Heart left ventricle (tissue), 16 donors: ENCODE measurements at regions of chr10 and their contacts with region 1.

Region 1: GRCh38 chr10:43396928-43397624 is 11.9 kb downstream of the HNRNPF start:
- DNase-seq: peak; percentile 91 to 93 (median 92)
- ATAC-seq: peak; percentile 87 to 92 (median 92)
- H3K4me3 ChIP-seq: peak overlapping the region; percentile 12 to 90 (median 73)
- H3K27ac ChIP-seq: peak overlapping the region; percentile 90 to 99 (median 96)
- H3K4me1 ChIP-seq: peaks cover 0 to 84% (median 42%) of the 10 kb centered on the region in 12 donors
- H3K27me3 ChIP-seq: no peaks in the 10 kb centered on the region
- CTCF ChIP-seq: no peak
- POLR2A ChIP-seq: peak in 1 of 2 donors; percentile 47

Region 2: DNA sequence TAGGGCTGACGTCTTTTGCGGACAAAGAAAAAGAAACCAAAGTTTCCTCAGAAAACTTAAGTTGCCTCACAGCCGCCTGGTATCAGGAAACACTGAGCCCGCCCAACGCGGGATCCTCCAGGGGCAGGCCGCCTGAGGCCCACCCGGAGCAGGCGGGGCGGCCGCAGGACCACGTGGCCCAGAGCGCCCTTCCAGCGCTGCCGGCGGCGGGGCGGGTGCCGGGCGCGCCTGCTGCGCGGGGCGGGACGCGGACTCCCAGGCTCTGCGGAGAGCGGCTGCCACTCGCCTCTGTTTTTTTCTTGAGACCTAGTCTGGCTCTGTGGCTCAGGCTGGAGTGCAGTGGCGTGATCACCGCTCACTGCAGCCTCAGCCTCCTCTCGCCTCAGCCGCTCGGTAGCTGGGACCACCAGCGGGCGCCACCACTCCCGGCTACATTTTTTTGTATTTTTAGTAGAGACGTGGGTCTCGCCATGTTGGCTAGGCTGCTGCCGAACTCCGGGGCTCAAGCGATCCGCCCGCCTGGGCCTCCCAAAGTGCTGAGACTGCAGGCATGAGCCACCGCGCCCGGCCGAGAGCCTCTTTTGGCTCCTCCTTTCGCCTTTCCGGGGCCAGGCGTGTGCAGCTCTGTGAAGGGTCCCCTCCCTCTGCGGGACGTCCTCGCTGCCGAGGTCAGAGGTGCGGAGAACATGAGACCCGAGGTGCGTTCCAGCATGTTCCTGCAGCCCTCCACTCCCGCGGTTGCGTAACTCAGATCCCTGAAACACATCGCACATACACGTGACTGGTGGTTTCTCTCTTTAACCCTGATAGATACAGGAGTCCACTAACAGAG is 23.5 kb after region 1 on chr10:
- intact Hi-C with region 1: loop called in 2 of 10 experiments (anchors 2 kb)
- DNase-seq: peak; percentile 91 to 94 (median 93)
- ATAC-seq: peak; percentile 94 to 99 (median 96)
- H3K4me3 ChIP-seq: peak overlapping the region; percentile 22 to 86 (median 66)
- H3K27ac ChIP-seq: peak overlapping the region; percentile 95 to 100 (median 98)
- H3K4me1 ChIP-seq: peaks cover 0 to 42% (median 9%) of the 10 kb centered on the region in 12 donors
- H3K27me3 ChIP-seq: no peaks in the 10 kb centered on the region
- CTCF ChIP-seq: peak in 6 of 12 donors; percentile 8 to 57 (median 30)
- POLR2A ChIP-seq: peak in 1 of 2 donors; percentile 76

Region 3: DNA sequence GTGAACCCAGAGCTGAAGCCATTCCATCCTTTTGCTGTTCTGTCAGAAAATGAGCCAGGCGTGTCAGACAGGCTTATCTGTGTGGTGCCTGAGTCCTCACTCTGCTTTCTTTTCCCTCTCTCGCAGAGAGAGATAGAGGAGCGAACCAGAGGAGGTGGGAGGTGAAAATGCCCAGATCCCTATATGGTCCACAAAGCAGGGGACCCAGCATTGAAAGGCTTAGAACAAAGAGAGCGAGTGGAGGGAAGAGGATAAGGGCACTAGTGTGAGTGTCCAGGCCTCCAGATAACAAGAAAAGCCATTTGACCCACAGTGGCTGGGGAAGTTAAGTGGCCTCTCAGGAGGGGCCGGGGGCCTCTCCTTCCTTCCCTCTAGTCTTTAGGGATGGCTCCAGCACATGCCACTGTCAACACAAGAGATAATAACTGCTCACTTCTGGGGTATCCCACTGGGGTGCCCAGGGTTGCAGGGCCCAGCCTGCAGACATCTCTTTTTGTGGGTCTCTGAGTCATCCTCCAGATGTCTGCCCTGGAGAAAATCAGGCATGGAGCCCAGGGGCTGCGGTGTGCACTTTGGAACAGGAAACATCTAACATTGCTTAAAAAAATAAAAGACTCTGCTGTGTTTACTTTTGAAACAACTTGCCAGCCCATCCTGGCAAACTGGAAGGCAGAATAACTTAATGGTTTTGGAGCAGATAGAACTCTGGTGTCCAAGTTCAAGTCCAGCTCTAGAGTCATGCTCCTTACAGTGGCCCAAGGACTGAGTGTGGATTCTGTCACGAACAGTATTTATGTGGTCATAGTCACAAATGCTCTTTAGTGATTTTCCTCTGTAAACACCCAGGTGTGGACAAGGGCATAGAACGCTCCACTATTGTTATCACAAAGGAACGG is 798.3 kb after region 1 on chr10:
- intact Hi-C with region 1: no loop called
- DNase-seq: peak; percentile 54 to 75 (median 66)
- ATAC-seq: peak; percentile 33 to 86 (median 74)
- H3K4me3 ChIP-seq: no peak overlapping the region
- H3K27ac ChIP-seq: peak overlapping the region in 4 of 12 donors; percentile 28 to 41 (median 34)
- H3K4me1 ChIP-seq: peaks cover 0 to 50% (median 18%) of the 10 kb centered on the region in 12 donors
- H3K27me3 ChIP-seq: no peaks in the 10 kb centered on the region
- CTCF ChIP-seq: no peak
- POLR2A ChIP-seq: no peak